CD8-positive, alpha-beta T cell (primary cell): ENCODE measurements at regions of chr22 and their contacts with region 1.

Region 1: DNA sequence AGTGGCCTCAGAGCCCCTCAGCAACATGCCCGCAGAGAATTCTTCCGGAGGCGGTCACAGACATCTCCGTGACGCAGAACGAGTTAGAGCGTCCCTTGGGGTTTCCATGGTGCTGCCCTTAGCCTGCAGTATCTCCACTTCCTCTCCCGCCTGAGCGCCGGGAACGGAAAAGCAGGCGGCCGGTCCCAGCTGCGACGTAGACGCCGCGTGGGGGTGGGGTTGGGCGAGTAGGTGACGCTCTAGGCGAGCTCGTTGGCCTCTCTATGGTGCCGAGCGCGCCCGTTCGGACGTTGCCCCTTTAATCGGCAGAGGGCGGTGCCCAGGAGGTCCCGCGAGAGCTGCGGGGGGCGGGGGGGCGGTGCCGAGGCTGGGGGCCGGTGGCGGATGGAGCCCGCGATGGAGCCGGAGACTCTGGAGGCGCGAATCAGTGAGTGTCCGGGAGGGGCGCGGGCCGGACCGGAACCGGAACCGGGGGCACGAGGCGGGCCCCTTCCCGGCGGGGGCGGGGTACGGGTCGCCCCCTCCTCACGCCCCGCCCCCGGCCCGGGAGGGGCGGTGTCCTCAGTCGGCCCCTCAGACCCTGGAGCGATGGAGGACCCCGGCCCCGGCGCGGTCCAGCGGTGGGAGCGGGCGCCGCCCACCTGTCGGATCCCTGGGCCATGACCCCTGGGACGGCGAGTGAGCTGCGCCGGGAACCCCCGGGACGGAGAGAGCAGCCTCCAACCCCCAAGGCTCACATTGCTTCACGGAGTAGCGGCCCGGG is at the start of gene GGA1:
- DNase-seq: peak; percentile 89 to 100 (median 95)
- ATAC-seq: peak; percentile 76
- H3K4me3 ChIP-seq: peak within 1 kb of the TSS; percentile 71 to 84
- H3K4me3 Mint-ChIP-seq: peak within 1 kb of the TSS; percentile 89
- H3K27ac ChIP-seq: peak within 1 kb of the TSS; percentile 84 to 99
- H3K27ac Mint-ChIP-seq: peak within 1 kb of the TSS; percentile 92
- H3K4me1 ChIP-seq: peaks cover 58% of the 10 kb centered on the region
- H3K4me1 Mint-ChIP-seq: peaks cover 56% of the 10 kb centered on the region
- H3K27me3 ChIP-seq: no peaks in the 10 kb centered on the region
- H3K27me3 Mint-ChIP-seq: no peaks in the 10 kb centered on the region
- CTCF ChIP-seq: no peak
- total RNA-seq, gene GGA1: 66.0 to 69.1 TPM

Region 2: GRCh38 chr22:37244114-37244921 is 364.3 kb before region 1 on chr22 and contains the start of gene RAC2:
- CTCF ChIA-PET with region 1: no interaction called
- POLR2A ChIA-PET with region 1: no interaction called
- intact Hi-C with region 1: loop called in 1 of 2 experiments (anchors 5 kb)
- DNase-seq: peak; percentile 71 to 95 (median 90)
- ATAC-seq: peak; percentile 54
- H3K4me3 ChIP-seq: peak within 1 kb of the TSS; percentile 79 to 98
- H3K4me3 Mint-ChIP-seq: peak within 1 kb of the TSS; percentile 98
- H3K27ac ChIP-seq: peak within 1 kb of the TSS; percentile 81
- H3K27ac Mint-ChIP-seq: peak within 1 kb of the TSS; percentile 100
- H3K4me1 ChIP-seq: peaks cover 45% of the 10 kb centered on the region
- H3K4me1 Mint-ChIP-seq: peaks cover 55% of the 10 kb centered on the region
- H3K27me3 ChIP-seq: no peaks in the 10 kb centered on the region
- H3K27me3 Mint-ChIP-seq: no peaks in the 10 kb centered on the region
- CTCF ChIP-seq: no peak
- total RNA-seq, gene RAC2: 152 to 159 TPM

Region 3: DNA sequence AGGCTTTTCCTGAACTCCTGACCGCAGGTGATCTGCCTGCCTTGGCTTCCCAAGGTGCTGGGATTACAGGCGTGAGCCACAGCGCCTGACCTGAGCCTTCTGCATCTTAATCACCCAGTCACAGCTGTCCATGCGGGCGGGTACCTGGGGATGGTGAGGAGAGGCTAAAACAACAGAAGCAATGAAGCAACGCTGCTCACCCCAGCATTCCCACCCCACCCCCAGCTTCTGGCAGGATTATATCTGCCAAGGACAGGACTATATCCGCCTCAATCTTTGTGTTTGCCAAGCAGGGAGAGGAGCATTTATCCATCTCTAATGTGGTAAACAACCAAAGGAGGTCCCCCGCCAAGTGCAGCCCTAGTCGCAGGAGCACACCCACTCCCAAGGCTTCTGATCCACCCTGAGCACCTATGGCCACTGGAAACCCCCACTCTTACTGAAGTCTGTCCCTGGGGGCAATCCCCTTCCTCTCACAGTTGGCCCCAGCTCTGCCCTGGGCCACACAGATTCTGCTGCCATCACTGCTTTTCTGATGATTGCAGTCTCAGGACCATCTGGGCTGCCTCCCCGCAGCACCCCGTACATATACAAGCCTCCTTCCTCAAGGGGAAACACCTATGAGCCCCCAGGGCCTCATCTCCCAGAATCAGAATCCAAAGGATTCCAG is 20.0 kb before region 1 on chr22:
- CTCF ChIA-PET with region 1: interaction called, 85 read pairs
- POLR2A ChIA-PET with region 1: interaction called, 25 read pairs
- intact Hi-C with region 1: loop called (anchors 1 kb)
- DNase-seq: no peak
- ATAC-seq: no peak
- H3K4me3 ChIP-seq: no peak overlapping the region
- H3K4me3 Mint-ChIP-seq: no peak overlapping the region
- H3K27ac ChIP-seq: no peak overlapping the region
- H3K27ac Mint-ChIP-seq: no peak overlapping the region
- H3K4me1 ChIP-seq: peaks cover 6% of the 10 kb centered on the region
- H3K4me1 Mint-ChIP-seq: peaks cover 11% of the 10 kb centered on the region
- H3K27me3 ChIP-seq: peaks cover 0 to 2% of the 10 kb centered on the region in 2 experiments
- H3K27me3 Mint-ChIP-seq: peaks cover 3% of the 10 kb centered on the region
- CTCF ChIP-seq: no peak

Region 4: DNA sequence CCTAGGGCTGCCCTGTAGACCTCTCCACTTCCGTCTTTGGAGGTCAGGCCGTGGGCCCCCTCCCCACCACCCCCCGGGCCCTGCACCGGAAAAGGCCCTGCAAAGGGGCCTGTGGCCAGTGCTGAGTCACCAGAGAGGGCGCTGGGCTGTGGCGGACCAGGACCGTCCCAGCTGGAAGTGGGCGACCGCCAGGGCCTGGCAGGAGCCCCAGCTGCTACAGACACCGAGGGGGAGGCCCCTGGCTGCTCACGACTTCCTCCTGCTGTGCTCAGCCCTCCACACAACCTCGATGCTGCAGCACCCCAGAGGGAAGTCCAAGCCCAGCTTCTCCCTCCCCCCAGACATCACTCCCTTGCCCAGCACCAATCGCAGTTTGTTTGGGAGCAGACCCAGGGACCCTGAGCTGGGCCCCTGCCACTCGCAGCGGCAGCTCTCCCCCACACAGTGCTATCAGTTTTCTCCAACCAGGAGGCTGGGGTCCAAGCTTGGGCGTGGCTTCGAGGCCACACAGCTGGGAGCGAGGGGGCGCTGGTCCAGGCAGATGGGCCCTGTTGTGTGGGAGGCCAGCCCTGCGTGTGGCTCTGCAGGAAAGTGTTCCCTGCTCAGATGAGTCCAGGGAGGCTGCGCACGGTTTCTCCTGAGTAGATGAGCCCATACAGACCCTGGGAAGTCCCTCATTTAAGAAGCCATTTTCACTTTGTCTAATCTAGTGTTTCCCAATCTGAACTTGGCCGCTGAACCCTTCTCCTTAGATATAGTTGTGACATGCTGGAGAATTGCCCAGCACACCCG is 25.2 kb after region 1 on chr22:
- CTCF ChIA-PET with region 1: interaction called, 2,176 read pairs
- POLR2A ChIA-PET with region 1: interaction called, 45 read pairs
- intact Hi-C with region 1: loop called (anchors 1 kb)
- DNase-seq: peak in 8 of 9 experiments; percentile 42 to 84 (median 64)
- ATAC-seq: peak; percentile 62
- H3K4me3 ChIP-seq: peak overlapping the region; percentile 34 to 40
- H3K4me3 Mint-ChIP-seq: peak overlapping the region; percentile 74
- H3K27ac ChIP-seq: peak overlapping the region; percentile 39 to 79
- H3K27ac Mint-ChIP-seq: peak overlapping the region; percentile 92
- H3K4me1 ChIP-seq: peaks cover 89% of the 10 kb centered on the region
- H3K4me1 Mint-ChIP-seq: peaks cover 78% of the 10 kb centered on the region
- H3K27me3 ChIP-seq: no peaks in the 10 kb centered on the region
- H3K27me3 Mint-ChIP-seq: no peaks in the 10 kb centered on the region
- CTCF ChIP-seq: no peak

Region 5: DNA sequence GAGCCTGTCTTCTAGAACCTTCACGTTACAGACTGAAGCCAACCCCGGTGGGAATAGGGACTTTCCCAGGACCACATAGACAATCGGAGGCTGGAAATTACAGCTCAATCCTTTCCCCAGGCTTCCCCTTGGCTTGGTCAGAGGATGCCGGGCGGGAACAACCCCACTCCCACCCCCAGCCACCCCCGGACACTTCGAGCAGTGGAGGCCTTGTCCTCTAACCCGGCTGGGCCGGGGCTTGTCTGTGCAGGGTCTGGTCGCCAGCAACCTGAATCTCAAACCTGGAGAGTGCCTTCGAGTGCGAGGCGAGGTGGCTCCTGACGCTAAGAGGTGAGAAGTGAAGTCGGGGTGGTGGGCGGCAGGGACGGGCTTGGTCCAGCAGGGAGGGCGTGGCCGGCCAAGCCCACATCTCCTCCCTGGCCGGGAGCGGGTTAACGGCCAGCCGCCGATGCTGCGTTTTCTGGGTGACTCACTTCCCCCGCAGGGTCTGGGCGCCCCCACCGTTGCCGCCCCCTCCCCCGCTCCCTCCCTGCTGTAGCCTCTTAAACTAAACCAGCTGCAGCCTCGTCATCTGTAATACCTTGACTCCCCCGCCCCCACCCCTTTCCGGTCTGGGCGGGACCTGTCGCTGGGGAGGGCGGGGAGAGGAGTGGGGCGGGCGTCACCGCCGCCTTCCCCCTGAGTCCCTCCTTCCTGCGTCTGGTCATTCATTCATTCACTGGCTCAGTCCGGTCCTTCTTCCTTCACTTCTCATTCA is 68.3 kb after region 1 on chr22:
- CTCF ChIA-PET with region 1: interaction called, 2,176 read pairs
- POLR2A ChIA-PET with region 1: interaction called, 16 read pairs
- intact Hi-C with region 1: loop called (anchors 1 kb)
- DNase-seq: peak; percentile 85 to 96 (median 94)
- ATAC-seq: peak; percentile 89
- H3K4me3 ChIP-seq: peak overlapping the region; percentile 73 to 93
- H3K4me3 Mint-ChIP-seq: peak overlapping the region; percentile 95
- H3K27ac ChIP-seq: peak overlapping the region; percentile 91 to 95
- H3K27ac Mint-ChIP-seq: peak overlapping the region; percentile 100
- H3K4me1 ChIP-seq: peaks cover 50% of the 10 kb centered on the region
- H3K4me1 Mint-ChIP-seq: peaks cover 55% of the 10 kb centered on the region
- H3K27me3 ChIP-seq: no peaks in the 10 kb centered on the region
- H3K27me3 Mint-ChIP-seq: no peaks in the 10 kb centered on the region
- CTCF ChIP-seq: no peak

Region 6: DNA sequence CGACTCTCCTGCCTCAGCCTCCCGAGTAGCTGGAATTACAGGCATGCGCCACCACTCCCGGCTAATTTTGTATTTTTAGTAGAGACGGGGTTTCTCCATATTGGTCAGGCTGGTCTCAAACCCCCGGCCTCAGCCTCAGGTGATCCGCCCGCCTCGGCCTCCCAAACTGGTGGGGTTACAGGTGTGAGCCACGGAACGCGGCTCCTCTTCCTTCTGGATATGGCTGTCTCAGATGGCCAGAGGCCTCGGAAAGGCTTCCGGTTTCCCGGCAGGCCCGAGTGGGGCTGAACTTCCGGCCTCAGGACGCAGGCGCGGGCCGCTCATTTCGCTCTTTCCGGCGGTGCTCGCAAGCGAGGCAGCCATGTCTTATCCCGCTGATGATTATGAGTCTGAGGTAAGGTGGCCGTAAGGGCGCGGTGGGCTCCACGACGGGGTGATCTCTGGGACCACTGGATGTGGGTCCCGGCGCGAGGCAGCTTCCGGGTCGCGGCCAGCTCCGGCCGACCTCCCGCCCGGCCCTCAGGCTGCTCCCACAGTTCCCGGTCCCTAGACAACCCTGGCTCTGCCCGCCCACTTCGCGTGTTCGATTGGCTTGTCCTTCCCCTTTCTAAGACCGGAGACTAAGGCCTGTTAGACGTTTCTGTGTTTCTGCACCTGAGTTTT is 240.6 kb after region 1 on chr22 and contains the start of gene EIF3L:
- CTCF ChIA-PET with region 1: no interaction called
- POLR2A ChIA-PET with region 1: interaction called, 4 read pairs
- intact Hi-C with region 1: loop called (anchors 1 kb)
- DNase-seq: peak; percentile 73 to 93 (median 87)
- ATAC-seq: peak; percentile 67
- H3K4me3 ChIP-seq: peak within 1 kb of the TSS; percentile 63 to 89
- H3K4me3 Mint-ChIP-seq: peak within 1 kb of the TSS; percentile 84
- H3K27ac ChIP-seq: peak within 1 kb of the TSS; percentile 60 to 88
- H3K27ac Mint-ChIP-seq: peak within 1 kb of the TSS; percentile 98
- H3K4me1 ChIP-seq: peaks cover 27% of the 10 kb centered on the region
- H3K4me1 Mint-ChIP-seq: peaks cover 43% of the 10 kb centered on the region
- H3K27me3 ChIP-seq: no peaks in the 10 kb centered on the region
- H3K27me3 Mint-ChIP-seq: no peaks in the 10 kb centered on the region
- CTCF ChIP-seq: no peak
- total RNA-seq, gene EIF3L: 510 to 518 TPM